ENCODE measurements at regions of chr11 and their contacts with region 1.

Region 1: GRCh38 chr11:120682866-120683265 is 171.3 kb downstream of the GRIK4 start:
- DNase-seq: no peak
- CTCF ChIP-seq: no peak

Region 2: GRCh38 chr11:120500414-120501071 is 182.3 kb before region 1 on chr11:
- CTCF ChIA-PET with region 1: interaction called, 11 read pairs
- POLR2A ChIA-PET with region 1: no interaction called
- DNase-seq: no peak
- CTCF ChIP-seq: no peak

Region 3: DNA sequence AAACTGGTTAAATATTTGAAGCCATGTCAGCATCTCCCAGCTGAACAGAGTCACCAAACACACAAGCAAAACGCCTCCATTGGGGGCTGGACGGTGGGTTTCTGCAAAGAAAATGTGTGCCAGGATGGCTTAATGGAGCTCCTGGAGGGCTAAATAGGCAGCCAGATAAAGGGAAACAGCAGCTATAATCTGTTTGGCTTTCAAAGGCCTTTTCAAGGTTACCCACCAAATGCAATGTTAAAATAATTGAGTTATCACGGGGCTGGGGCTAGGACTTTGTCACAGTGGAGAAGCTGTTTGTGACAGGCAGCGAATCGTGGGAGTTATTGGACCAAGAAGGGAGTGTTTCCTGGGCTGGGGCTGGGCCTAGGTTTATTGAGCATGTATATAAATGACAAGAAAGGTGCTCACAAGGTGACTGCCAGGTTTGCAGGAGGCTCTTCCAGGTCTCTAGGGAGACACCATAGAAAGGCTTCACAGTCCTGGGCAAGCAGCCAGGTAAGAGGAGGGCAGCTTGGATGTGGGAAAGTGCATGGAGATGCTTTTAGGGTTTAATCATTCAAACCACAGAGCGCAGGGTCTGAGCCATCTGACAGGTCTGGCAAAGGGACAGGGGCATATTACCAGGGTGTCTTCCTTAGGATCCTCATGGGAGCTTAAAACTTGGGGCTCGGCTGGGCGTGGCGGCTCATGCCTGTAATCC is 143.0 kb before region 1 on chr11:
- CTCF ChIA-PET with region 1: interaction called, 10 read pairs
- POLR2A ChIA-PET with region 1: no interaction called
- DNase-seq: no peak
- CTCF ChIP-seq: no peak

Region 4: DNA sequence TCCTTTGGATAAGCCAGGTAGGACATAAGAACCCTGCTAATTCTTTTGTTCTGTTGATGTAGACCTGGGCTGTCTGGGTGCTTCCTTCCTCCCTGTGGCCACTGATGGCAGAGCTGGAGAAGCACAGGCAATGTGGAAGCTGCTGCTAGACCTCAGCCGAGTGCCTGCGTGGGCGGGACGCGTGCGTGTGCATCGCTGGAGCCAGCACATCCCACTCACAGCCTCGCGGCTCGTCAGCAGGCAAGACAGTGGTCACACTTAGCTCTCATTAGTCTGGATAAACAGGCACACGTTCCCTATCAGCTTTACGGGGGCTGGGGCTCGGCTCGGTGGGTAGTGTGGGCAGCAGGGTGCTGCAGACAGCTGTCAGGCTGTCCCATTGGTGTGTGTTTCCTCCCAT is 15.6 kb before region 1 on chr11:
- CTCF ChIA-PET with region 1: interaction called, 69 read pairs
- POLR2A ChIA-PET with region 1: no interaction called
- DNase-seq: no peak
- CTCF ChIP-seq: no peak

Region 5: DNA sequence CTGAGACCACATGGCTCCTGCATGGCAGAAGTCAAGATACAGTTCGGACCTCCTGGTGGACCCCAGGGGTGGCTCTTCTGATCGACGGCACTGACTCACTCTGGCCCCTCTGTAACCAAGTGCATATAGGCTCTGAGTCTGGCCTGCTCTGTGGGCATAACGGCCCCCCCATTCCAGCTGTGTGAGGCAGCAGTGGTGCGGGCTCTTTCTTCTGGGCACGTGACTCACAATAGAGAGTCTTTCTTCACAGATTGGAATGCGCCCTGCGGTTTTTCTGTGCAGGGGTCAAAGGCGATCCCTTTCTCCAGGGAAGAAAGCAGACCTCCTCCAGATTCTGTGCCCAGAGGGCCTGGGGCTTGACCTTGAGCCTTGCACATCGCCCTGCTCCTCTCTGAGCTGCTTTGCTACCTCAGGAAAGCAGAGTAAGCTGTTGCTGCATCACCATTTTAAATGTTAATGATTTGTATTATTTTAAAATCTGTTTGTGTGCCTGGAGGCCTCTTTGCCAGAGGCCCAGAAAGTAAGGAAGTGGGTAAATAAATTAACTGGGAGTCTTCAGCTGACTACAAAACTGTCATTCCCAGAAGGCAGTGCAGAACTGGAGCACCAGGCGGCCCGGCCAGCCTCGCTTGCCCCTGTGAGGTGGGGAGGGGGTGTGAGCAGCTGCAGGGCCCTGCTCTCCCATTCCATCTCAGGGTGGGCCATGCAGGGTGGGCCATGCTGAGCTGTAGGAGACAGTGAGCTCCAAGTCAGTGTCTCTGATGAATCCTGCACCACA is 27.7 kb after region 1 on chr11:
- CTCF ChIA-PET with region 1: interaction called, 16 read pairs
- POLR2A ChIA-PET with region 1: no interaction called
- DNase-seq: no peak
- CTCF ChIP-seq: no peak

Region 6: DNA sequence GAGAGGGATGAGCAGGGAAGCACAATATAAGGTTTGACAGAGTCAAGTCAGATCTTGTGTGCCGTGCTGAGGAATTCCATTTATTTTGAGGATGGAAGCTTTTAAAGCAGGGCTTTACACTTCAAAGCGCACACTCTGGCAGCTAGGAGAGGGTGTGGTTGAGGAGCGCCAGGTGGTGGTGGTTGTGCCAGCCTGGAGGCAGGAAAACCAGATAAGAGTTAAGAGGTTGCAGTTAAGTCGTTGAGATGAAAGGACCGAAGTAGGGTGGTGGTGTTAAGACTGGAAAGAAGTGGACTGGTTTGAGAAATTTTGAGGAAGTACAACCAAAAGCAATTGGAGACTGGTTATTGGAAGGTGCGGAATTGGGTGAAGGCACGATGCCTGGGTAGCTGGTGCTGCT is 109.4 kb after region 1 on chr11:
- CTCF ChIA-PET with region 1: no interaction called
- POLR2A ChIA-PET with region 1: no interaction called
- DNase-seq: no peak
- CTCF ChIP-seq: no peak

Measured in GM10248 (cell line).